ENCODE measurements at regions of chr21 and their contacts with region 1.

Region 1: DNA sequence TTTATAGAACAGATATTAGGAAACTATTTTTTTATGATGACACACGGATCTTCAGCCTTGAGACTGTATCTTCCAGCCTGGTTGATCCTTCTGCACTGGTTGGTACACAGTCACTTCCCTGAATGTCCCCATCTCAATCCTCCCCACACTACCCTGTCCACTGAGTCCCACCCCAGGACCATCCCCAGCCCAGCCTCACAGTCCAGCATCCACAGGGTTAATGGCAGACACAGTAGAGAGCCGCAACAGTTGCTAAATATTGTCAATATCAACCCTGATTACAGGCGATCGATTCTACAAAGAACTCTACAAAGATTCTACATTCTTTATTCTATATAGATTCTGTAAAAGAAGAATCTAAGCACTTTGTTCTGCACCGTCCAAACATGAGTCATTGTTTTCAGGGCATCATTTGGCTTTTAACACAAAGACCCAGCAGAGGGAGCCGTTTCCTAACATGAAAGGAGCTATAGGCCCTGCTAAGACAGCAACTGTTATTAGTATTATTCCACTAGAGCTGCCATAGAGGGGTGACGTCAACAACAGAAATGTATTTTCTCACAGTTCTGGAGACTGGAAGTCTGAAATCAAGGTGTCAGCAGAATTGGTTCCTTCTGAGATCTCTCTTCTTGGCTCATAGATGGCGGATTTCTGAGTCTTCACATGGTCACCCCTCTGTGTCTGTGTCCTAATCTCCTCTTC is 30.1 kb upstream of the IFNAR2 start:
- DNase-seq: peak; percentile 95
- ATAC-seq: peak; percentile 78
- H3K4me3 ChIP-seq: no peak overlapping the region
- H3K27ac ChIP-seq: no peak overlapping the region
- H3K4me1 ChIP-seq: peaks cover 8% of the 10 kb centered on the region
- H3K27me3 ChIP-seq: peaks cover 4% of the 10 kb centered on the region; the same call in 1 of the 2 replicates
- CTCF ChIP-seq: peak; percentile 97
- POLR2A ChIP-seq: no peak
- RAD21 ChIP-seq: peak; percentile 97

Region 2: DNA sequence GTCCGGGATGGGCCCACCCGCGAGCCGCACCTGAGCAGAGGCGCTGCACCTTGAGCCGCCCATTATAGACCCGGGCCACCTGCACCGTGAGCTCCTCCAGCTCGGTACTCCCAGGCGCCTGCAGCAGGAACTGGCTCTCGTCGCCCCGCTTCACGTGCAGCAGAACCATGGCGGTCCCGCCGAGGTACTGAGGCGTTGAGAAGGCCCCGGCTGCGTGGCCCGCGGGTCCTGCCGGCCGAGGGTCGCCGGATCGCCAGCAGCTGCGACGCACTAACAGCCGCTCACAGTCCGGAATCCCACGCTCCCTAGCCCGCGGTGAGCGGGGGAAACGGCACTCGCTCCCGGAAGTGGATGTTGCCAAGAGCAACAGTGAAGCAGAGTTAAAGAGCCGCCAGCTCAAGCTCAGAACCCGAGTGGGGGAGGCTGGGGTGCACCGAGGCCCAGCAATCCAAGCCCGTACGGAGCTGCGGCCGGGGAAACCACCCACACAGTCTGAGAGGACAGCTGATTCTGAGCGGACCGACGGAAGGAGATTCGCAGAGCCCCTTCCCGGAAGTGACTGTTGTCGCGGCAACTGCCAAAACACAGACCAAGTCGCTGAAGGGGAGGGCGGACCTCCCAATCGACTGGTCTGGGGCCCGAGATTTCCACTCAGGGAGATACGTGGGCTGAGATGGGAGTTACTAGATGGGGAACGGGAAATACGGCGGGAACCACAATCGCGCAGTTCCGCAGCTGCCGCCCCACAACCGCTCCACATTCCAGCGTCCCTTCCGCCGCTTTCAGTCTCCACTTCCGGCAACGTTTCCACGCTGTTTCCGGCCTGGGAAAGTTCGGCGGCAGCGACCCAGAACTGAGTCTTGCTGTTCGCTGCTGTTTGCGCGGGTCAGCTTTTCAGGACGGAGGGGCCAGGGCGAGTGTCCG is 587.3 kb before region 1 on chr21 and contains the start of gene CFAP298:
- CTCF ChIA-PET with region 1: no interaction called
- POLR2A ChIA-PET with region 1: no interaction called
- dilution Hi-C with region 1: no loop called
- in situ Hi-C with region 1: no loop called
- intact Hi-C with region 1: no loop called
- DNase-seq: peak; percentile 95
- ATAC-seq: peak; percentile 97
- H3K4me3 ChIP-seq: peak within 1 kb of the TSS; percentile 80
- H3K27ac ChIP-seq: peak within 1 kb of the TSS; percentile 91
- H3K4me1 ChIP-seq: peaks cover 2% of the 10 kb centered on the region; the same call in 1 of the 2 replicates
- H3K27me3 ChIP-seq: no peaks in the 10 kb centered on the region
- CTCF ChIP-seq: no peak
- POLR2A ChIP-seq: peak; percentile 73
- RAD21 ChIP-seq: no peak
- total RNA-seq, gene CFAP298: 8.1 and 16.1 TPM in 2 replicates

Region 3: GRCh38 chr21:32940079-32941014 is 259.3 kb before region 1 on chr21:
- CTCF ChIA-PET with region 1: interaction called, 6 read pairs
- POLR2A ChIA-PET with region 1: no interaction called
- dilution Hi-C with region 1: no loop called
- in situ Hi-C with region 1: no loop called
- intact Hi-C with region 1: loop called (anchors 1 kb)
- DNase-seq: peak; percentile 43
- ATAC-seq: peak; percentile 68
- H3K4me3 ChIP-seq: no peak overlapping the region
- H3K27ac ChIP-seq: no peak overlapping the region
- H3K4me1 ChIP-seq: no peaks in the 10 kb centered on the region
- H3K27me3 ChIP-seq: peaks cover 4% of the 10 kb centered on the region; the same call in 1 of the 2 replicates
- CTCF ChIP-seq: peak; percentile 63
- POLR2A ChIP-seq: no peak
- RAD21 ChIP-seq: peak; percentile 53

Region 4: DNA sequence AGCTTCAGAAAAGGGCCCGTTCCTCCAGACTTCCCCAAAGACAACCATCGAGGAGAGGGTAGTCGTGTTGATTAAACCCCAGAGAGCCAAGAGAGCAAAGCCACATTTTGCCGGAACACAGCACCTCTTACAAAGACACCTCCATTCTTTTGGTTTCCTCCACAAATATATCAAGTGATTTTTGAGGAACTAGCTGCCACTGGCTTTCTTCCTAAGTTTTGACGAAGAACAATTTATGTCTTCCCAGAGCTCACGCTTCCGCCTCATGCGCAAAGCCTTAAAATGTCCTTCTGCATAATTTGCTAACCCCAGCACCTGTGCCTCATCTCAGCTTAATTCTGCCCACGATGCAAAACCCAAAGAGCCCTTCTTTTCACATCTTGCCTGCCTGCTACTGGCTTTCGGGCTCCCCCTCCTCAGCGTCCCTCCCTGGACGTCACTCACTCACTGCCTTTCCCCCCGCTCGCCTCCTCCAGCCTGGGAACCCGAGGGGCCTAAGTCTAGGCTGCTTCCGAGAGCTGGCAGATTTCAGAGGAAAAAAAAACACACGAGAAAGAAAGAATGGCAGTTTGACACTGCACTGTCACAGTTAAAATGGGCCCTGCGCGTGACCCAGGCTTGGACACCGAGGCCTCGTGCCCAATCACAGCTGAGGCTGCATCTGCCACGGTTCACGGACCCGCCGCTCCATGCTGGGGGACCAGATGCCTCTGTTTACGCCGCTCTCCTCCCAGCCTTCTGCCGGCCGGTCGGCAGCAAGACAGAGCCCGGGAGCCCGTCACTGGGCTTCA is 47.5 kb before region 1 on chr21:
- CTCF ChIA-PET with region 1: no interaction called
- POLR2A ChIA-PET with region 1: no interaction called
- dilution Hi-C with region 1: no loop called
- in situ Hi-C with region 1: no loop called
- intact Hi-C with region 1: no loop called
- DNase-seq: no peak
- ATAC-seq: no peak
- H3K4me3 ChIP-seq: no peak overlapping the region
- H3K27ac ChIP-seq: no peak overlapping the region
- H3K4me1 ChIP-seq: no peaks in the 10 kb centered on the region
- H3K27me3 ChIP-seq: peaks cover 39% of the 10 kb centered on the region
- CTCF ChIP-seq: no peak
- POLR2A ChIP-seq: no peak
- RAD21 ChIP-seq: no peak

Region 5: GRCh38 chr21:33185852-33186251 is 13.8 kb before region 1 on chr21:
- CTCF ChIA-PET with region 1: interaction called, 13 read pairs
- POLR2A ChIA-PET with region 1: no interaction called
- dilution Hi-C with region 1: no loop called
- in situ Hi-C with region 1: no loop called
- intact Hi-C with region 1: no loop called
- DNase-seq: no peak
- ATAC-seq: no peak
- H3K4me3 ChIP-seq: no peak overlapping the region
- H3K27ac ChIP-seq: no peak overlapping the region
- H3K4me1 ChIP-seq: no peaks in the 10 kb centered on the region
- H3K27me3 ChIP-seq: peaks cover 38% of the 10 kb centered on the region
- CTCF ChIP-seq: no peak
- POLR2A ChIP-seq: no peak
- RAD21 ChIP-seq: no peak

Region 6: DNA sequence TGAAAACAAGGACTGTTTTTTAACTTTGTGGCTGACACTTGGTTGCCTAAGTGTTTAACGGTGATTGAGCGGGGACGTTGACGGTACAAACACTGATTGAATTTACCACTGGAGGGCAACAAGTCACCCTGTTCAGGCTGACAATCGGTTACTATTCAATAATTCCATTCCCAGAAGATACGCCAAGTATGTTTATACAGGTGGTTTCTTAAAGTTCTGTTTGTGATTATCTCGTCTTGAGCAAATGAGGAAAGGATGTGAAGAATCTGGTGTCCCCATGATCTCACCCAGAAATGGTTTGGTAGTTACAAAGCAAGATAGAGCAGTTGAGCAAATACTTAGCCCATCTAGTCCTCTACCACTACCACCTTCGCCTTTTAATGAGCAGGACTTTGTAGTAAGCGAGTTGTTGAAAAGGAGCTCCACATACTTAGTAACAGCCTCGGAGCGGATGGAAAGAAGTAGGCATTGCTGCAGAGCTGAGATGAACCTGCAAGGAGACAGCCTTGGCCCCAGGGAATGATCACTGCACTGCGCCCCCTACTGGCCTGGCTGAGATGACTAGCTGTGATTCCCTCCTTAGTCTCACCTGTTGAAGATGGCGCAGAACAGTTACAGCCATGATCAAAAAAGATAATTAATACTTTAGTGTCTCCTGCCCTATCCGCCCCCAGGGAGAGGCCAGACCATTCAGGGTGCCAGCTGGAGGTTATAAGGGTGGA is 161.4 kb after region 1 on chr21:
- CTCF ChIA-PET with region 1: interaction called, 5 read pairs
- POLR2A ChIA-PET with region 1: no interaction called
- dilution Hi-C with region 1: no loop called
- in situ Hi-C with region 1: no loop called
- intact Hi-C with region 1: loop called (anchors 1 kb)
- DNase-seq: peak; percentile 87
- ATAC-seq: peak; percentile 74
- H3K4me3 ChIP-seq: no peak overlapping the region
- H3K27ac ChIP-seq: no peak overlapping the region
- H3K4me1 ChIP-seq: peaks cover 5% of the 10 kb centered on the region
- H3K27me3 ChIP-seq: no peaks in the 10 kb centered on the region
- CTCF ChIP-seq: peak; percentile 64
- POLR2A ChIP-seq: no peak
- RAD21 ChIP-seq: peak; percentile 49

Region 7: DNA sequence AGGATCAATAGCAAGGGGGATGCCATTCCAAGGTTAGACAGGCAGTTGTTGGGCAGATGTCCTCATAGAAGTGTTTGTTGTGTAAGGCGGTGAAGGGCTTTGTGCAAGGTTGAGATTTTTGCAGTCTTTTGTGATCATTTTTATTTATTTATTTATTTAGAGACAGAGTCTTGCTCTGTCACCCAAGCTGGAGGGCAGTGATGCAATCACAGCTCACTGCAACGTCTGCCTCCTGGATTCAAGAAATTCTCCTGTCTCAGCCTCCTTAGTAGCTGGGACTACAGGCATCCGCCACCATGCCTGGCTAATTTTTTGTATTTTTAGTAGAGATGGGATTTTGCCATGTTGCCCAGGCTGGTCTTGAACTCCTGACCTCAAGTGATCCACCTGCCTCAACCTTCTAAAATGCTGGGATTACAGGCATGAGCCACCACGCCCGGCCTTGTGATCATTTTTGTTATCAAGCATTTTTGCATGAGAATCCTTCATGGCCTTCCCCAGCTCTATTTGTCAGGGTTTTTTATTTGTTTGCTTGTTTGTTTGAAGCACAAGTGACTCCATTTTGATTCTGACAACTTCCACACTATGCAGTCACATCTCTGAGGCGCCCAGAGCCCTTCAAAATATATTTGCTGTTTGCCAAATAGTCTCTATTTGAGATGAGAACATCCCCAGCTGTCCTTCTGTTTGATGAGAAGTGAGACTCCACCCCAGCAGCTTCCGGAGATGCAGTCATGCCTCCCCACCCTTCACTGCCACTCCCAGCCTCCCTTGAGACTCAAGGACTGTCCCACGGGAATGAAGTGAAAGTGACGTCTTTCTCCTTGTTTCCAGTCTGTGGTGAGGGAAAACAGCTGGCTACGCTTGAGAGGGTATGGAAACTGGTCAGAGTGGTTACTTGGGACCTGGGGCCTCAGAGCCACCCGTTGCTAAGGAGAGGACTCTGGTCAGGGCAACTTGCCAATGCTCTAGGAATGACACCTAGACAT is 242.1 kb after region 1 on chr21:
- CTCF ChIA-PET with region 1: interaction called, 6 read pairs
- POLR2A ChIA-PET with region 1: interaction called, 3 read pairs
- dilution Hi-C with region 1: no loop called
- in situ Hi-C with region 1: loop called (anchors 5 kb)
- intact Hi-C with region 1: loop called (anchors 1 kb)
- DNase-seq: peak; percentile 94
- ATAC-seq: peak; percentile 63
- H3K4me3 ChIP-seq: no peak overlapping the region
- H3K27ac ChIP-seq: peak overlapping the region; percentile 22; the same call in 1 of the 2 replicates
- H3K4me1 ChIP-seq: peaks cover 5% of the 10 kb centered on the region
- H3K27me3 ChIP-seq: no peaks in the 10 kb centered on the region
- CTCF ChIP-seq: no peak
- POLR2A ChIP-seq: no peak
- RAD21 ChIP-seq: no peak

Measured in IMR-90 (cell line).